Breast epithelium (tissue), 4 donors: ENCODE measurements at regions of chrX and their contacts with region 1.

Region 1: GRCh38 chrX:86322918-86323317 is 174.7 kb downstream of the DACH2 start:
- DNase-seq: no peak
- H3K4me3 ChIP-seq: no peak overlapping the region
- H3K27ac ChIP-seq: no peak overlapping the region
- H3K4me1 ChIP-seq: no peaks in the 10 kb centered on the region
- H3K27me3 ChIP-seq: no peaks in the 10 kb centered on the region
- CTCF ChIP-seq: no peak
- POLR2A ChIP-seq: no peak

Region 2: GRCh38 chrX:86369847-86370630 is 47.1 kb after region 1 on chrX:
- intact Hi-C with region 1: loop called (anchors 1 kb)
- DNase-seq: no peak
- H3K4me3 ChIP-seq: no peak overlapping the region
- H3K27ac ChIP-seq: no peak overlapping the region
- H3K4me1 ChIP-seq: no peaks in the 10 kb centered on the region
- H3K27me3 ChIP-seq: peaks cover 0 to 15% of the 10 kb centered on the region in 2 donors
- CTCF ChIP-seq: no peak
- POLR2A ChIP-seq: no peak

Region 3: DNA sequence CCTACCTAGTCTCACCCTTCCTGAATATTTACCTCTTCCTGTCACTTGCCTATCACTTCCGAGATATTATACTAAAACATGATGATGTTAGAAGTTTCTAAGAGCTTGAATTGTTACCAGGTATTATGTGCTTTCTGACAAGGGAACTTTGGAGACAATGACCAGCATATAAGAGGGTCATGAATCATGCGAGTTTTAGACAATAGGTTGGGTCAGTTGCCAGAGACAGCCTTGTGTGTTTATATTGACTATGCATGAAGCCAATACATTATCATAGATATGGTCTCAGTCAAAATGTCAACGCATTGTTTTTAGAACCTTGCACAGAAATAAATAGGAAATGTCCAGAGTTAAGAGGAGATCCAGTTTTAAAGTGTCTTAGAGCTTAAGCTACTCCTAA is 1311.4 kb after region 1 on chrX:
- intact Hi-C with region 1: no loop called
- DNase-seq: no peak
- H3K4me3 ChIP-seq: no peak overlapping the region
- H3K27ac ChIP-seq: no peak overlapping the region
- H3K4me1 ChIP-seq: no peaks in the 10 kb centered on the region
- H3K27me3 ChIP-seq: peaks cover 0 to 25% of the 10 kb centered on the region in 2 donors
- CTCF ChIP-seq: no peak
- POLR2A ChIP-seq: no peak